Activated T-helper 1 cell treated with anti-CD3 and anti-CD28 coated beads, Interleukin-12 subunit alpha, Interleukin-12 subunit beta, Interleukin-2, Interleukin-4 antibody, amounts not matched to agents 30 ng/mL and 10 ng/mL and 1 ng/mL, durations not matched to agents 14 hours and 24 hours and 36 hours (primary cell): ENCODE measurements at regions of chr6 and their contacts with region 1.

Region 1: DNA sequence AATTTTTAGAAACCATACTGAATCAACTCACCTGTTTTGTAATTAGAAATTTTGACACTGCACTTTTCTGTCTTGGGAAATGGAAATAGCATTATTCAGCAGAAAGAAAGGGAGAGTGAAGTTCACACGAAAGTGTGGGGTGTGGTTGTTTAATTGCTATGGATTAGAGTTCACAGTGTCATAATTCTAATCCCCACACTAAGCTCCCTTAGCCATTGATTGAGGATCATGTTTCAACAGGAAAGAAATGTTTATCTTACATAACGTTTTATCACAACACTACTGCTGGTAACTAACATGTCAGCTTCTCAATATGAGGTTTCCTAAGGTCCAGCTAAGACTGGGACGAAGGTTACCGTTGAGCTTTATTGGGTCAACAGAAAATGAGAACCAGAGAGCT is 31.4 kb upstream of the GSTA5 start:
- DNase-seq: no peak
- H3K4me3 Mint-ChIP-seq: no peak overlapping the region
- H3K27ac Mint-ChIP-seq: no peak overlapping the region
- H3K4me1 Mint-ChIP-seq: peaks cover 7% of the 10 kb centered on the region
- H3K27me3 Mint-ChIP-seq: peaks cover 9% of the 10 kb centered on the region

Region 2: DNA sequence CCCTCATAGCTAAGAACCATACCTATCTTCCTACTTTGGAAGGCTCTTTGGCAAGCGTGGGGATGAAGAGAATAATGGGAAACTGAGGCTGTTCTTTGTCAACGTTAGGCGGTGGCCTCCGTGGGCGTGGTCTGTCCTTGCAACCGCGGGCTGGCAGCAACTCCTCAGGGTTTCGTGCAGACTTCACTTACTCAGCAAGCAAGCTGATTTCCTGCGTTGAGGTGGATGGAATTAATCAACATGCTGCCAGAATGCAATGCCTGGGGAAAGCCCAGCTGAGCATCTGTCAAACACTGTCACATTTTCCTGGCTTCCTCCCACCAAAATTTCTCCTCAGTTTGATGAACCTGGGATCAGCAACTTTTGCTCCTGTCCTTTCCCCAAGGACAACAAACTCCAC is 618.5 kb before region 1 on chr6:
- intact Hi-C with region 1: loop called (anchors 5 kb)
- DNase-seq: peak; percentile 19
- H3K4me3 Mint-ChIP-seq: no peak overlapping the region
- H3K27ac Mint-ChIP-seq: no peak overlapping the region
- H3K4me1 Mint-ChIP-seq: peaks cover 32% of the 10 kb centered on the region
- H3K27me3 Mint-ChIP-seq: peaks cover 54% of the 10 kb centered on the region